Psoas muscle (tissue), 8 donors: ENCODE measurements at regions of chr3 and their contacts with region 1.

Region 1: GRCh38 chr3:126357295-126358037 is at the start of gene KLF15:
- DNase-seq: peak; percentile 92 to 95
- ATAC-seq: peak; percentile 68 to 75 (median 70)
- H3K4me3 ChIP-seq: peak within 1 kb of the TSS; percentile 74
- H3K27ac ChIP-seq: peak within 1 kb of the TSS; percentile 99
- H3K4me1 ChIP-seq: peaks cover 43% of the 10 kb centered on the region
- H3K27me3 ChIP-seq: no peaks in the 10 kb centered on the region
- CTCF ChIP-seq: no peak
- total RNA-seq, gene KLF15: 13.2 to 64.0 (median 33.0) TPM

Region 2: GRCh38 chr3:126287536-126288241 is 69.8 kb before region 1 on chr3:
- intact Hi-C with region 1: loop called in 1 of 2 experiments (anchors 5 kb)
- DNase-seq: peak; percentile 67 to 87
- ATAC-seq: peak; percentile 85 to 91 (median 88)
- H3K4me3 ChIP-seq: peak overlapping the region; percentile 69
- H3K27ac ChIP-seq: peak overlapping the region; percentile 88
- H3K4me1 ChIP-seq: peaks cover 13% of the 10 kb centered on the region
- H3K27me3 ChIP-seq: no peaks in the 10 kb centered on the region
- CTCF ChIP-seq: no peak

Region 3: DNA sequence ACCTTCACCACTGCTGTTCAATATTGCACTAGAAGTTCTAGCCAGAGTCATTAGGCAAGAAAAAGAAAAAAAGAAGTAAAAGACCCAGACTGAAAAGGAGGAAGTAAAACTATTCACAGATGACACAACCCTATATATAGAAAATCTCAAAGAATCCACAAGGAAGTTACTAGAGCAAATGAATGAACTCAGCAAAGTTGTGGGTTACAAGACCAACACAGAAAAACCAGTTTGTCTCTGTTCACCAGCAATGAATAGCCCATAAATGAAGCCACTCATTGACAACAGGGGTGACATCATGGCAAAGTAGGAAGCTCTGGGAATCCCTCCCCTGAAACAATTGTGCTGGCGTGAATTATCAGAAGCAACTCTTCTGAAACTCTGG is 41.9 kb after region 1 on chr3:
- intact Hi-C with region 1: no loop called
- DNase-seq: no peak
- ATAC-seq: no peak
- H3K4me3 ChIP-seq: no peak overlapping the region
- H3K27ac ChIP-seq: no peak overlapping the region
- H3K4me1 ChIP-seq: no peaks in the 10 kb centered on the region
- H3K27me3 ChIP-seq: peaks cover 0 to 3% (median 0%) of the 10 kb centered on the region in 3 donors
- CTCF ChIP-seq: no peak

Region 4: GRCh38 chr3:126475413-126476114 is 118.1 kb after region 1 on chr3 and contains the start of gene ZXDC:
- intact Hi-C with region 1: loop called in 1 of 2 experiments (anchors 10 kb)
- DNase-seq: peak; percentile 96 to 98
- ATAC-seq: peak; percentile 76 to 90 (median 80)
- H3K4me3 ChIP-seq: peak within 1 kb of the TSS; percentile 87
- H3K27ac ChIP-seq: peak within 1 kb of the TSS; percentile 96
- H3K4me1 ChIP-seq: peaks cover 42% of the 10 kb centered on the region
- H3K27me3 ChIP-seq: no peaks in the 10 kb centered on the region
- CTCF ChIP-seq: peak; percentile 54
- total RNA-seq, gene ZXDC: 30.3 to 39.5 (median 35.9) TPM